Spleen (tissue), 13 donors: ENCODE measurements at regions of chr10 and their contacts with region 1.

Region 1: GRCh38 chr10:75235375-75236177 is at the start of gene COMTD1:
- DNase-seq: peak; percentile 100
- H3K4me3 ChIP-seq: peak within 1 kb of the TSS; percentile 68 to 92 (median 86)
- H3K27ac ChIP-seq: peak within 1 kb of the TSS; percentile 70 to 91 (median 85)
- H3K4me1 ChIP-seq: peaks cover 0 to 36% (median 30%) of the 10 kb centered on the region in 6 donors
- H3K27me3 ChIP-seq: no peaks in the 10 kb centered on the region
- CTCF ChIP-seq: peak; percentile 100
- POLR2A ChIP-seq: peak in 1 of 3 donors; percentile 25
- total RNA-seq, gene COMTD1: 14.2 to 26.3 (median 18.0) TPM

Region 2: DNA sequence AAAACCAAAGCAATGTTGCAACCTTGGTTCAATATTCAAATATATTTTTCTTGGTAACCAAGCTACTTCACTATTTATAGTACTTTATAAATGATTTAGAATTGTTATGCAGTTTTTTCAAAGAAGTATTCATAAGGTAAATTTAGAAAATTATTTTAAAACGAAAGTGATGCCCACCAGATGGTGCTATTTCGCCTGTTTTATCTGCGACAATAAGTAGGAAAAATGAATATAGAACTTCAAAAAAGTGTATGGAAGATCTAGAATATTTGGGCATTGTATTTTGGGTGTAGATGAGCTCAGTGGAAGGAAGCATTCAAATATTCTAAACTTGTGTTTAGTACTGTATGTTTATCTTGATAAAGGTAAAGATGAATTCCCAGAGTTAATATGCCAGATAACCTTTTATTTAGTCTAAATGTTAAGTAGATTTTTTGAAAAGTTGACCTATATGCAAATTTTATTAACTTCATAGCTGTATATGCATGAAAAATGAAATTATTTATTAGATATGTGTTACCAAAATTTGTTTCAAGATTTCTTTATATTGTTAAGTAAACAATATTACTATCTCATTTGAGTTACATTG is 991.4 kb before region 1 on chr10:
- intact Hi-C with region 1: loop called (anchors 10 kb)
- DNase-seq: no peak
- H3K4me3 ChIP-seq: no peak overlapping the region
- H3K27ac ChIP-seq: no peak overlapping the region
- H3K4me1 ChIP-seq: peaks cover 0 to 19% (median 3%) of the 10 kb centered on the region in 6 donors
- H3K27me3 ChIP-seq: no peaks in the 10 kb centered on the region
- CTCF ChIP-seq: peak in 9 of 11 experiments; percentile 9 to 53 (median 40)
- POLR2A ChIP-seq: no peak

Region 3: DNA sequence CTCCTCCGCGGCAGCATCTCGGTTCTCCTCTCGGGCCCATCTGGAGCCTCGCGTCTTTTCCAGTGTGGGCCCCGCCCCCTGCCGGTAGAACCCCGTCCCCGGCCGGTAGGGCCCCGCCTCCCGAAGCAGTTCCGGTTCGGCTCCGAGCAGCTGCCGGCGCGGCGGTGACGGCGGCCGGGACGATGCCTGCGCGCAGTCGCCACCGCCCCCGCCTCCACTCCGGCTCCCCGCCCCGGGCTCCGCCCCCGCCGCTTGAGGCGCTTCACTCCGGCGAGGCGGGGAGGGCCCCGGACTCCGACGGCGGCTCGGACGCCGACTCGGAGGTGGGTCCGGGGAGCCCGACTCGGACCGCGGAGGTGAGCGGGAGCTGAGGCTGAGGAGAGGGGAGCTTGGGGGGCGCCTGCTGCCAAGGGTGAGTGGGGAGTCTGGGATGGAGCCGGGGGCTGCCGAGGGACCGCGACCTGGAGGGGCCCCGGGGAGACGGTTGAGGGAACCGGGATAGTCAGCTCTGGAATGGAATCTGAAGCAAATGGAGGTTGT is 124.1 kb before region 1 on chr10 and contains the start of gene SAMD8:
- intact Hi-C with region 1: loop called (anchors 5 kb)
- DNase-seq: peak; percentile 99
- H3K4me3 ChIP-seq: peak within 1 kb of the TSS; percentile 68 to 89 (median 75)
- H3K27ac ChIP-seq: peak within 1 kb of the TSS; percentile 95 to 98 (median 98)
- H3K4me1 ChIP-seq: peaks cover 12 to 71% (median 38%) of the 10 kb centered on the region in 6 donors
- H3K27me3 ChIP-seq: no peaks in the 10 kb centered on the region
- CTCF ChIP-seq: peak in 10 of 11 experiments; percentile 24 to 78 (median 64)
- POLR2A ChIP-seq: peak; percentile 23 to 86 (median 70)
- total RNA-seq, gene SAMD8: 24.3 to 35.1 (median 28.3) TPM

Region 4: GRCh38 chr10:75187961-75188426 is 47.6 kb before region 1 on chr10:
- intact Hi-C with region 1: loop called (anchors 10 kb)
- DNase-seq: peak; percentile 83
- H3K4me3 ChIP-seq: no peak overlapping the region
- H3K27ac ChIP-seq: peak overlapping the region in 5 of 8 donors; percentile 24 to 65 (median 53)
- H3K4me1 ChIP-seq: peaks cover 0 to 22% (median 4%) of the 10 kb centered on the region in 6 donors
- H3K27me3 ChIP-seq: no peaks in the 10 kb centered on the region
- CTCF ChIP-seq: peak; percentile 38 to 71 (median 54)
- POLR2A ChIP-seq: no peak